ENCODE measurements at regions of chr12 and their contacts with region 1.

Region 1: GRCh38 chr12:14365294-14366208 is at the start of gene ATF7IP:
- DNase-seq: peak; percentile 68
- H3K4me3 ChIP-seq: peak within 1 kb of the TSS; percentile 22
- H3K27ac ChIP-seq: peak within 1 kb of the TSS; percentile 51
- H3K4me1 ChIP-seq: peaks cover 36% of the 10 kb centered on the region
- CTCF ChIP-seq: peak; percentile 75
- total RNA-seq, gene ATF7IP: 55.6 and 69.8 TPM in 2 replicates

Region 2: GRCh38 chr12:14185427-14186192 is 179.9 kb before region 1 on chr12:
- CTCF ChIA-PET with region 1: no interaction called
- POLR2A ChIA-PET with region 1: no interaction called
- intact Hi-C with region 1: loop called (anchors 2 kb)
- DNase-seq: peak; percentile 75
- H3K4me3 ChIP-seq: no peak overlapping the region
- H3K27ac ChIP-seq: no peak overlapping the region
- H3K4me1 ChIP-seq: peaks cover 23% of the 10 kb centered on the region
- CTCF ChIP-seq: peak; percentile 96

Region 3: DNA sequence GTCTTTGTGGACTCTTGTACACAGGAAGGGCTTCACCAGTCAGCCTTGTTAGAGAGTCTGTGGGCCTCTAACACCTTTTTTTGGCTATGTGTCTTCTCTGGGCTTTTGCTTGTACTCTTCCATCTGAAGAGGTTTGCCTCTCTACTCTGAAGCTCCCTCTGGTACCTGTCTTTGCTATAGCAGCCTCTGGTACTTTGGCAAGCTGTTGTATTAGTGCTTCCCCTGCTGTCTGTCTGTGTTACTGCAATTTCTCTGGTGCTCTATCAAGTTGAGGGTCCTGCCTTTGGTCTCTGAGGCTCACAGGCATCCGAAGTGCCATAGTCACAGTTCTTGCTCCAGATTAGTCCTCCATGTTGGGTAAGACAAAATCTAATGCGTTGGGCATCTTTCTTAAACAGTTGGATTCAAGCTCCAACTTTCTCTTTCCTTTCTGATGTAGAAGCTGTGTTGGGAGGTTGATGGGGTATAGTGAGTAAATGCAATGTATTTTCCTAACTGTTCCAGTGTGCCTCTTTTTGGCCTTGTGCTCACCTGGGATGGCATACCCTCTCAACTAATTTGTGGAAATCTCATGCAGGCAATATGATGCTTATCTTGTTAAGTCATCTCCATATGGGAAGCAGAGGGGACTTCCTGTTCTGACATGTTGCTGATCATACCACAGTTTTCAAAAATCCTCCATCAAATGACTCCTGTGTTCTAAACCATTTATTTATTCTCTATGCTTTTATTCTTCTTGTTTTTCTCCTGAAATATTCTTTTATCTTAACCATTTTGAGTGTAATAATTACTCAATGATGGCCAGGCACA is 88.8 kb after region 1 on chr12:
- CTCF ChIA-PET with region 1: no interaction called
- POLR2A ChIA-PET with region 1: interaction called, 4 read pairs
- intact Hi-C with region 1: loop called (anchors 5 kb)
- DNase-seq: peak; percentile 83
- H3K4me3 ChIP-seq: no peak overlapping the region
- H3K27ac ChIP-seq: no peak overlapping the region
- H3K4me1 ChIP-seq: peaks cover 10% of the 10 kb centered on the region
- CTCF ChIP-seq: peak; percentile 97